ENCODE measurements at regions of chr1 and their contacts with region 1.

Region 1: DNA sequence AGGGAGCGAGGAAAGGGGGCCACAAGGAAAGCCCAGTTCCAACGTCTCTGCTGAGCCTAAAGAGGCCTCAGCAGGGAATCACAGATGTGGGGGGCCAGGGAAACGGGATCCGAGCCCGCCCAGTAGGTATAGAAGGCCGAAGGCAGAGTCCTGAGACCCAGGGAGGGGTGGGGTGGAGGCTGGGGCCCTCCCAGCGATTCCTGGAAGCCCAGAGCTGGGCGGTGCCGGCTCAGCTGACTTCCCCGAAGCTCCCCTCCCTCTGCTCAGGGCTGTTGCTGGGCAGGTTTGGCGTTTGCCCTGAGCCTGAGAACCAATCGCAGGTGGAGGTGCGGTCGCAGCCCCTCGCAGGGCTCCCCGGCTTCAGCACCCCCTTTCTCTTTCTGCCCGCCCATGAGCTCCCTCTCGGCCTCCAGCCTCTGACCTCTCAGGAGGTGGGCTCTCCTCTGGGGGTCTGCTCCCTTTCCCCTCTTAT is 12.8 kb downstream of the ADAMTSL4 start:
- DNase-seq: peak; percentile 96
- ATAC-seq: peak; percentile 37
- H3K4me3 Mint-ChIP-seq: peak overlapping the region; percentile 81
- H3K27ac Mint-ChIP-seq: peak overlapping the region; percentile 99
- H3K4me1 Mint-ChIP-seq: peaks cover 57% of the 10 kb centered on the region
- H3K27me3 Mint-ChIP-seq: no peaks in the 10 kb centered on the region

Region 2: GRCh38 chr1:149915429-149916192 is 646.4 kb before region 1 on chr1:
- CTCF ChIA-PET with region 1: no interaction called
- POLR2A ChIA-PET with region 1: no interaction called
- intact Hi-C with region 1: no loop called
- DNase-seq: no peak
- ATAC-seq: no peak
- H3K4me3 Mint-ChIP-seq: peak overlapping the region; percentile 78
- H3K27ac Mint-ChIP-seq: no peak overlapping the region
- H3K4me1 Mint-ChIP-seq: peaks cover 19% of the 10 kb centered on the region
- H3K27me3 Mint-ChIP-seq: peaks cover 2% of the 10 kb centered on the region

Region 3: GRCh38 chr1:150149271-150150132 is 412.5 kb before region 1 on chr1 and contains the start of gene PLEKHO1:
- CTCF ChIA-PET with region 1: no interaction called
- POLR2A ChIA-PET with region 1: no interaction called
- intact Hi-C with region 1: no loop called
- DNase-seq: peak; percentile 89
- ATAC-seq: peak; percentile 74
- H3K4me3 Mint-ChIP-seq: peak within 1 kb of the TSS; percentile 82
- H3K27ac Mint-ChIP-seq: peak within 1 kb of the TSS; percentile 86
- H3K4me1 Mint-ChIP-seq: peaks cover 51% of the 10 kb centered on the region
- H3K27me3 Mint-ChIP-seq: peaks cover 1% of the 10 kb centered on the region
- total RNA-seq, gene PLEKHO1: 13.2 TPM

Region 4: GRCh38 chr1:150363426-150364230 is 198.4 kb before region 1 on chr1 and contains the start of gene RPRD2:
- CTCF ChIA-PET with region 1: interaction called, 5 read pairs
- POLR2A ChIA-PET with region 1: interaction called, 7 read pairs
- intact Hi-C with region 1: loop called (anchors 1 to 5 kb)
- DNase-seq: peak; percentile 99
- ATAC-seq: peak; percentile 95
- H3K4me3 Mint-ChIP-seq: peak within 1 kb of the TSS; percentile 91
- H3K27ac Mint-ChIP-seq: peak within 1 kb of the TSS; percentile 99
- H3K4me1 Mint-ChIP-seq: peaks cover 13% of the 10 kb centered on the region
- H3K27me3 Mint-ChIP-seq: no peaks in the 10 kb centered on the region
- total RNA-seq, gene RPRD2: 24.4 to 32.2 TPM

Region 5: GRCh38 chr1:150578965-150579798 is 17.2 kb after region 1 on chr1 and contains the start of gene MCL1:
- CTCF ChIA-PET with region 1: interaction called, 239 read pairs
- POLR2A ChIA-PET with region 1: interaction called, 333 read pairs
- intact Hi-C with region 1: loop called (anchors 1 kb)
- DNase-seq: peak; percentile 94
- ATAC-seq: peak; percentile 81
- H3K4me3 Mint-ChIP-seq: peak within 1 kb of the TSS; percentile 95
- H3K27ac Mint-ChIP-seq: peak within 1 kb of the TSS; percentile 97
- H3K4me1 Mint-ChIP-seq: peaks cover 24% of the 10 kb centered on the region
- H3K27me3 Mint-ChIP-seq: no peaks in the 10 kb centered on the region
- total RNA-seq, gene MCL1: 185 to 265 TPM

Region 6: GRCh38 chr1:150696590-150697524 is 134.8 kb after region 1 on chr1 and contains the start of gene GOLPH3L:
- CTCF ChIA-PET with region 1: interaction called, 10 read pairs
- POLR2A ChIA-PET with region 1: interaction called, 6 read pairs
- intact Hi-C with region 1: loop called (anchors 1 to 2 kb)
- DNase-seq: peak; percentile 93
- ATAC-seq: peak; percentile 100
- H3K4me3 Mint-ChIP-seq: peak within 1 kb of the TSS; percentile 98
- H3K27ac Mint-ChIP-seq: peak within 1 kb of the TSS; percentile 92
- H3K4me1 Mint-ChIP-seq: peaks cover 21% of the 10 kb centered on the region
- H3K27me3 Mint-ChIP-seq: peaks cover 3% of the 10 kb centered on the region
- total RNA-seq, gene GOLPH3L: 24.2 to 29.1 TPM

Region 7: DNA sequence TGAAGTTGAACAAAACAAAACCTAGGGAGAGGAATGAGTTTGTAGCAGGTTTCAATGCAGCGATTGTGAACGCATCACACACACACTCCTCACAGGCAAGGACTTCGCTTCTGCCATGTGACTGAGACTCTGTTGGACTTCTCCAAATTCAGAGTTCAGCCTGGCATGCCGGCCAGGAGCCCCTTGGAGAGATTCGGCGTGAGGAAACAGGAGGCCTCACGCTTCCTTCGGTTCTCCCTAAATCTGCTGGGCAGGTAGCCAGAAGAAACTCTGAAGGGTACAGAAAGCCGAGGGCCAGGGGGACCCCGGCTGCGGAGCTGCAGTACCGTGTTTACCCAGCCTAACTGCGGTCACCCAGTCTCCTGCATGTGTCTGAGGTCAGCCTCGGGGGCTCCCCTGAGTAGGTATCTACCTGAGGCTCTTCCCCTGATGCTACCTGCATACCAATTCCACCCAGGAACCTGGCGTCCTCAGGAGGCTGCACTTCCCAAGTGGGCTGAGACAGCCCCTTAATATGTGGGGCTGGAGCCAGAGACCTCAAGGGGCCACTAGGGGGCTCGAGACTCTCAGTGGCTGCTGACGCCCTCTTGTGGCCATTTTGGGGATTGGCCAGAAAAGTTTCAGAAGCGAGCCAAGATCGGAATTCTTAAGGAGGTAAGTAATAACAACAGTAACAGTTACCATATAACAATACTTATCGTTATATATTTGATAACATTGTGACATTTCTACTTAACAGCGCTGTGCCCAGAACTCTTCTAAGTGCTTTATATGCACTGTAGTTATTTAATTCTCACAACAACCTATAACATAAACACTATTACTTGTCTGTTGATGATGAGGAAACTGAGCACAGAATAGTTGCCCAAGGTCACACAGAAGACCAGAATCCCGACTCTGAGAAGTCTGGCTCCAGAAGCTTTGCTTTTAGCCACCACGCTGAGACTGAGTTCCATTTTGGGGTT is 417.4 kb after region 1 on chr1:
- CTCF ChIA-PET with region 1: no interaction called
- POLR2A ChIA-PET with region 1: interaction called, 3 read pairs
- intact Hi-C with region 1: loop called (anchors 2 to 5 kb)
- DNase-seq: peak; percentile 94
- ATAC-seq: peak; percentile 53
- H3K4me3 Mint-ChIP-seq: no peak overlapping the region
- H3K27ac Mint-ChIP-seq: peak overlapping the region; percentile 63
- H3K4me1 Mint-ChIP-seq: peaks cover 39% of the 10 kb centered on the region
- H3K27me3 Mint-ChIP-seq: no peaks in the 10 kb centered on the region

Region 8: GRCh38 chr1:151165738-151166505 is 603.9 kb after region 1 on chr1 and contains the starts of genes LYSMD1 and SCNM1:
- CTCF ChIA-PET with region 1: no interaction called
- POLR2A ChIA-PET with region 1: no interaction called
- intact Hi-C with region 1: loop called in 1 of 2 experiments (anchors 10 kb)
- DNase-seq: peak; percentile 98
- ATAC-seq: peak; percentile 96
- H3K4me3 Mint-ChIP-seq: peak within 1 kb of the TSS; percentile 92
- H3K27ac Mint-ChIP-seq: peak within 1 kb of the TSS; percentile 98
- H3K4me1 Mint-ChIP-seq: peaks cover 48% of the 10 kb centered on the region
- H3K27me3 Mint-ChIP-seq: no peaks in the 10 kb centered on the region
- total RNA-seq, gene LYSMD1: 4.3 to 5.1 TPM
- total RNA-seq, gene SCNM1: 64.3 to 90.8 TPM

Measured in activated CD4-positive, alpha-beta T cell treated with anti-CD3 and anti-CD28 coated beads for 36 hours (primary cell).